Gastrocnemius medialis (tissue), 4 donors: ENCODE measurements at regions of chr1 and their contacts with region 1.

Region 1: DNA sequence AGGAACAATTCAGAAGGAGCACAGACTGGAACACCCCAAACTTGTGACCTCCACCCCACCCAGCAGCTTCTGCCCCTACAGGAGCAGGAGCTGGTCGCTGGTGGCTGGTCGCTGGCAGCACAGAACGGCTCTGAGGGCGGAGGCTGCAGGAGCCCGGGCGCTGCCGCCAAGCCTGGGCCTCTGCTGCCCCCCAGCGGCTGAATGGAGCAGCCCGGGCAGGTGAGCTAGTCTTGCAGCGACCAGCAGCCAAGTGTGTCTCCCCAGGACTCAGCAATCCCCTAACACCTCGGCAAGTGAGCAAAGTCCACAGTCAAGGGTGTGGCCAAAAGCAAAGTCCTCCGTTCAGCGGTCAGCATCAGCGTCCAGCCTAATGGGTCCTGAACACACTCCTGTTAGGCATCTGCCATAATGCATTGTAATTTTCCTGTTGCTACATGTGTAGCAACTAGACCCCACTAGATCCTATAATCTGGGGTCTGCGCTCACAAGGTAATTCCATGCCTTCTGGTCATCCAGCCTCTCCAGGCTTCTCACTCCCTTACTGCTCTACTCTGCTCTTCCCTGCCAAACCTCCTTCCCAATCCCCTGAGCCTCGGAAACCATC is 12.1 kb upstream of the GJB5 start:
- DNase-seq: peak; percentile 19 to 32
- ATAC-seq: peak; percentile 50 to 75
- H3K4me3 ChIP-seq: no peak overlapping the region
- H3K27ac ChIP-seq: no peak overlapping the region
- H3K4me1 ChIP-seq: no peaks in the 10 kb centered on the region
- H3K27me3 ChIP-seq: peaks cover 0 to 5% (median 0%) of the 10 kb centered on the region in 3 donors
- CTCF ChIP-seq: peak; percentile 54 to 94 (median 79)
- POLR2A ChIP-seq: no peak

Region 2: DNA sequence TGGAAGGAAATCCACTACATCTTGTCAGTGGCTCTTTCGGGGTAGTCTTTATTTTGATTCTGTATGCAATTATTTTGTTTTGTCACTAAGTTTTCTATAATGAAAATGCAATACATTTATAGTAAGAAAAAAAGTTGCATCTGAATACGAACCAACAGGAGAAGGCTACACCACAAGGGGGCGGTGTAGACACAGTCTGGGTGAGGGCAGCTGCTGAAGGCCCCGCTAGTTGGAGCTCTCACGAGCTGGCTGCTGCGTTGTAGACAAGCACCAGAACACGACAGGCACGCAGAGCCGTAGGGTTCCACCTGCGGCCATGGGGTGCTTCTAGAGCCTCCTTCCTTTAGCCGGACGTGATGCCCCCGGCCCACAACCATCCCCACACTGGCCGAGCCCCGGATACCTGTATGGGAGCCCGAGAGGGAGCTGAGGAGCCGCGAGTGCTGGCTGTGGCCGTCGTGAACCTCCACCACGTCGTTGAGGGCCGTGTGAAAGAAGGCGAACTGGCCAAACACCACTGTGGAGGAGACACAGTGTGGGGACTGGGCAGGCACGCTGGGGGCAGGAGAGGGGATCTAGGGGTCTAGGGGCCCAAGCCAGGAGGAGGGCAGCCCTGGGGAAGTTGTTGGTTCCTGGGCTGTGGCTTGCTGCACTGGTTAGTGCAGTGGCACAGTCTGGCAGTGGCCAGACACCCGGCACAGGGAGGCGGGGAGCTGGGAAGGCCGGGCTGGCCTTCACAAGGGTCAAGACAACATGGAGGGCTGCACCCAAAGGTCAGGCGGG is 1109.6 kb before region 1 on chr1:
- in situ Hi-C with region 1: loop called (anchors 10 to 25 kb)
- intact Hi-C with region 1: loop called (anchors 2 kb)
- DNase-seq: peak; percentile 72 to 79
- ATAC-seq: peak; percentile 87 to 94
- H3K4me3 ChIP-seq: no peak overlapping the region
- H3K27ac ChIP-seq: no peak overlapping the region
- H3K4me1 ChIP-seq: no peaks in the 10 kb centered on the region
- H3K27me3 ChIP-seq: no peaks in the 10 kb centered on the region
- CTCF ChIP-seq: peak; percentile 62 to 96 (median 81)
- POLR2A ChIP-seq: no peak

Region 3: DNA sequence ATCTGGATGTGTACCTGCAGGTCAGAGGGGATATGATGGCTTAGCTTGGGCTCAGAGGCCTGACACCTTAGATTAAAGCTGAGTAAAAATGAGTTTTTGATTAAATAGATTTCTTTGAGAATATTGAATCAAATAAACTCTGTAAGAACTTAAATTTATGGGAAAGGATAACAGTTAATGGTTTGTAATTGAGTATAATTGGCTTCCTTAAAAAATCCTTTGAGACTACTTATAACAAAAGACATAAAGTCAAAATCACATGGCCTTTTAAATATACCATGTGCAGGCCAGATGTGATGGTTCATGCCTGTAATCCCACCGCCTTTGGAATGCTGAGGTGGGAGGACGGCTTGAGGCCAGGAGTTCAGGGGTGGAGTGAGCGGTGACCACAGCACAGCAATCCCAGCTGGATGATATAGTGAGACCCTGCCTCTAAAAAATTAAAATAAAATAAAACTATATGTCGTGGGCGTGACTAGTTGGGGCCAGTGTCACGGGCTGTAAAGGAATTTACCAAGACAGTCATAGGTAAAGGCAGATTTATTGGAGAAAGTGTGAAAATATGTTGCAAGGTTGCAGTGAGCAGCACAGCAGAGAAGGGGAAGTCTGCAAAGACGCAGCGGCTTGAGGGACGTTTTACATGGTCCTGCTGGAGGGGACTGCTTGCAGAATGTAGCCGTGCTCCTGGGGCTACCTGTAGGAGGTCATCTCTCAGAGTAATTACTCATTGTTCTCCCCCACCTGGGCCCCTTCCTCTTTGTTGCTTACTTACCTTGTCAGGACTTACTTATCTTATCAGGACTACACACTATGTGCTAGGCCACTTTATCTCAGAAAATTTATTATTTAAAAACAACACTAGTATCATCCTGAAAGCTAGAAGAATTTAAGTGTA is 648.1 kb after region 1 on chr1:
- in situ Hi-C with region 1: no loop called
- intact Hi-C with region 1: no loop called
- DNase-seq: no peak
- ATAC-seq: no peak
- H3K4me3 ChIP-seq: no peak overlapping the region
- H3K27ac ChIP-seq: no peak overlapping the region
- H3K4me1 ChIP-seq: no peaks in the 10 kb centered on the region
- H3K27me3 ChIP-seq: no peaks in the 10 kb centered on the region
- CTCF ChIP-seq: no peak
- POLR2A ChIP-seq: no peak